Activated naive CD4-positive, alpha-beta T cell treated with anti-CD3 and anti-CD28 coated beads for 36 hours (primary cell): ENCODE measurements at regions of chr11 and their contacts with region 1.

Region 1: DNA sequence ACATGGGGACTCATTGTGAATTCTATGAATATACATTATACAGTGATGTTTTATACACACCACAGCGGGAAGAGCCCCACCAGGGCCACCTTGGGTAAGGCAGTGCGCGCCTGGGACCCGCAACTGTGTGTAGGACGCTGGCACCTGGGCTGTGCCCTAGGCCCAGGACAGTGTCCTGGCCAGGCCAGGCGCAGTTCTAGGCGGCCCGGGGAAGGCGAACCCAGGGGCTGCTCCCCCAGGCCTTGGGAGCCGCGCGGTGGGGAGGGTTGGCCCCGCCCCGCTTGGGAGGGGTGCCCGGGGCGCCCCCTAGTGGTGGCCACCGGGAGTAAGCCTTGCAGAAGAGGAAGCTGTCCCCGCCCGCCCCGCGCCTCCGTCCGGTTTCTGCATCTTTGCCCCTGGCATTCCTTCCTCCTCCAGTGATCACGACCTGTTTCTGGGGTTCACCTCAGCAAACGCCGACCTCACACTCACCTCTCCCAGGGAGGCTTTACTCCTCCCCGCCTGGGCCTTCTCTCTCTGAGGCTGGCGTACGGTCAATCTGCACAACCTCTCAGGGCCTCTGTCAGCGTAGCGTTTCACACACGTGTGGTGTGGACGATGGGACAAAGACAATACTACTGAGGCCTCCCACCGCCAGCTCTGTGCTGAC is 9.5 kb upstream of the EHD1 start:
- DNase-seq: peak; percentile 85
- H3K4me3 Mint-ChIP-seq: peak overlapping the region; percentile 68
- H3K27ac Mint-ChIP-seq: peak overlapping the region; percentile 73
- H3K4me1 Mint-ChIP-seq: peaks cover 33% of the 10 kb centered on the region
- H3K27me3 Mint-ChIP-seq: no peaks in the 10 kb centered on the region

Region 2: GRCh38 chr11:64854534-64855429 is 33.1 kb before region 1 on chr11:
- CTCF ChIA-PET with region 1: interaction called, 992 read pairs
- intact Hi-C with region 1: loop called (anchors 1 kb)
- DNase-seq: peak; percentile 67
- H3K4me3 Mint-ChIP-seq: no peak overlapping the region
- H3K27ac Mint-ChIP-seq: peak overlapping the region; percentile 89
- H3K4me1 Mint-ChIP-seq: peaks cover 94% of the 10 kb centered on the region
- H3K27me3 Mint-ChIP-seq: no peaks in the 10 kb centered on the region

Region 3: DNA sequence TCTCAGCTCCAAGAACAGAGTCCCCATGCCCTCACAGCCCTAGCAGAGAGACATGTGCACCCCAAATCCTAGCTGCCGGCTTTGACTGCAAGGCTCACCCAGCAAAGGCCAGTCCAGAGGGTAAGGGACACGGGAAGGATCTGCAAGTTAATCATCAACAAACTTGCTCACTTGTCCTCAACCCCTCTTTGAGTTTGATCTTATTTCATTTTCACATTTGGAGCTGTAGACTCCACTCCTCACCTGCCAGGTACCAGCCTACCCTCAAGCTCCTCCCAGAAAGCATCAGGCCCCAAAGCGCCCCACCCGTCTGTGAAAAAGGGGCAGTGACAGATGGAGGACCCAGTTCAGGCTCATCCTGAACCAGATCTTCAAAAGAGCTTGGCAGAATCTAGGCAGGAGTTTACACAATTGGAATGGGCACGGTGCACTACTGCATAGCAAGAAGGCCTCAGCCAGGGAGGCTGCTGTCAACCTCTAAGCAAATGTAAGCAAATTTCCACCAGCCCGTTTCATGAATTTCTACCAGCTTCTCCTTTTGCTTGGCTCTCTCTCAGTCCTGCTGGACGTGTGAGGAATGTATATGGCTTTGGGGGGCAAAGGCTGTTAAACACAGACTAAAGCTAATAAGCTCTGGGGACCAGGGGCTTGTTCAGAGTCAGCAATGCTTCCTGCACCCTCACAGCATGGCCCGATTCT is 14.9 kb before region 1 on chr11:
- CTCF ChIA-PET with region 1: interaction called, 992 read pairs
- intact Hi-C with region 1: loop called (anchors 1 kb)
- DNase-seq: no peak
- H3K4me3 Mint-ChIP-seq: peak overlapping the region; percentile 15
- H3K27ac Mint-ChIP-seq: peak overlapping the region; percentile 84
- H3K4me1 Mint-ChIP-seq: peaks cover 79% of the 10 kb centered on the region
- H3K27me3 Mint-ChIP-seq: no peaks in the 10 kb centered on the region

Region 4: DNA sequence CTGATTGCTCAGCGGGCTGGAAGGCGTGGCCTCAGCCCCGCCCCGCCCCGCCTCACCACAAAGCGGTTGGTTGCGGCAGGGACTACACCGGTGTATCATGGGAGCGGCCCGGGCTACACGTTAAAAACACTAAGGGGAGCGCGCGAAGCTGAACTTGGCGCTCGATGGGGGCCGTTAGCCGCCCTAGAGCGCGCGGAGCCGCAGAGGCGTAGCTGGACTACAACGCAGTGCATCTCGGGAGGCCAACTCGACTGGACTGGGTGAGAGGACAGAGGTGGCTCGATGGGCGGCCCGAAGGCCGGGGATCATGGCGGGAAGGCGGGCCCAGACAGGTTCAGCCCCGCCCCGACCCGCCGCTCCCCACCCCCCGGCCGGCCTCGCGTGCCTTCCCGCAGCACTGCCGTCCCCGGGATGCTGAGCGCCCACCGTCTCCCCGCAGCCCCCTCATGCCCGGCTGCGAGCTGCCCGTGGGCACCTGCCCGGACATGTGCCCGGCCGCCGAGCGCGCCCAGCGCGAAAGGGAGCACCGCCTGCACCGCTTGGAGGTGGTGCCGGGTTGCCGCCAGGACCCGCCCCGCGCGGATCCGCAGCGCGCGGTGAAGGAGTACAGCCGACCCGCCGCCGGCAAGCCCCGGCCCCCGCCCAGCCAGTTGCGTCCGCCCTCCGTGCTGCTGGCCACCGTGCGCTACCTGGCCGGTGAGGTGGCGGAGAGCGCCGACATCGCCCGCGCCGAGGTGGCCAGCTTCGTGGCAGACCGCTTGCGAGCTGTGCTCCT is 153.2 kb after region 1 on chr11 and contains the start of gene SAC3D1:
- CTCF ChIA-PET with region 1: no interaction called
- intact Hi-C with region 1: no loop called
- DNase-seq: peak; percentile 94
- H3K4me3 Mint-ChIP-seq: peak within 1 kb of the TSS; percentile 92
- H3K27ac Mint-ChIP-seq: peak within 1 kb of the TSS; percentile 98
- H3K4me1 Mint-ChIP-seq: peaks cover 19% of the 10 kb centered on the region
- H3K27me3 Mint-ChIP-seq: no peaks in the 10 kb centered on the region
- total RNA-seq, gene SAC3D1: 19.2 to 20.3 TPM